CD4-positive, alpha-beta T cell (primary cell): ENCODE measurements at regions of chr14 and their contacts with region 1.

Region 1: DNA sequence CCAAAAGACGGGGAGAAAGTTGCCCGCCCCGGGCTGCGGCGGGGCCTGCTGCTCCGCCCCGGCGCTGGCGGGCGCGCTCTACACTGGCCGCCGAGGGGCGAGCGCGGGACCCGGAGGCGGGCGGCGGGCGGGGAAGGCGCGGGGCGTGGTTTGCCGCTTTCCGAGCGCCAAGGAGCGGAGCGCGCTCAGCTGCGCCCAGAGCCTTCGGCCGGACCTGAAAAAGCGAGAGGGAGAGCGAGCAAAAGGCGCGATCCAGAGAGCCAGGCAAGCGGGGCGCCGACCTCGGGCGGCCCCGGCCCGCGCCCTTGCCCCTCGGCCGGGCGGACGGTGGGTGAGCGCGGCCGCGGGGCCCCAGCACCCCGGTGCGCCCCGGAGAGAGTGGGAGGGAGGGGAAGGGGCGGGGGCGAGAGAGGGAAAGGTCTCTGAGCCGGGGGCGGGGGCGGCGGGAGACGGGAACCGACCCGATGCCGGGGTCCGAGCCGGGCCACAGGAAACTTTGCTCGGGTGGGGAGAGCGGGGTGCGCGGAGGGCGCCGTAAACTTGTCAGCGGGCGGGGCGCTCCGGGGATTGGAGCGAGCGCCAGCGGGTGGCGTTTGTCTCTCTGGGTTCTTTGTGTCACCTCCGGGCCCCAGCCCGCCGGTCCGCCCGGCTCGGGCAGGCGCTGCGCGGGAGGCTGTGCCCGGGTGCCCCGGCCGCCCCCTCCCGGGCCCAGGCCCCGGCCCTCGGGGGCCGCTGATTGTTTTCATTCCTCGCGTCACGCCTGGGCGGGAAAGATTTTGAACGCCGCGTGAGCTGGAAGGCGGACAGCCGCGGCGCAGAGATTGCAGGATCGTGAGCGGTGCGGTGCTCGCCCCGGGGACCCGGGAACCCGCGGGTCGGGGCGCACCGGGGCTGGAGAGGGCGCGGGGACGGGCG is at the start of gene SYNE2:
- DNase-seq: peak; percentile 65 to 91 (median 81)
- ATAC-seq: peak; percentile 80
- H3K4me3 ChIP-seq: peak within 1 kb of the TSS; percentile 68
- H3K4me3 Mint-ChIP-seq: peak within 1 kb of the TSS; percentile 100
- H3K27ac ChIP-seq: peak within 1 kb of the TSS; percentile 25 to 71
- H3K27ac Mint-ChIP-seq: peak within 1 kb of the TSS; percentile 96
- H3K4me1 ChIP-seq: peaks cover 37% of the 10 kb centered on the region
- H3K4me1 Mint-ChIP-seq: peaks cover 43% of the 10 kb centered on the region
- H3K27me3 ChIP-seq: no peaks in the 10 kb centered on the region
- H3K27me3 Mint-ChIP-seq: no peaks in the 10 kb centered on the region
- CTCF ChIP-seq: no peak
- total RNA-seq, gene SYNE2: 87.4 to 92.6 TPM

Region 2: GRCh38 chr14:63641473-63642228 is 211.4 kb before region 1 on chr14 and contains the start of gene WDR89:
- CTCF ChIA-PET with region 1: no interaction called
- POLR2A ChIA-PET with region 1: interaction called, 3 read pairs
- intact Hi-C with region 1: loop called in 1 of 2 experiments (anchors 10 kb)
- DNase-seq: peak; percentile 90 to 99 (median 94)
- ATAC-seq: peak; percentile 83
- H3K4me3 ChIP-seq: peak within 1 kb of the TSS; percentile 96
- H3K4me3 Mint-ChIP-seq: peak within 1 kb of the TSS; percentile 91
- H3K27ac ChIP-seq: peak within 1 kb of the TSS; percentile 98 to 99
- H3K27ac Mint-ChIP-seq: peak within 1 kb of the TSS; percentile 91
- H3K4me1 ChIP-seq: peaks cover 27% of the 10 kb centered on the region
- H3K4me1 Mint-ChIP-seq: peaks cover 43% of the 10 kb centered on the region
- H3K27me3 ChIP-seq: no peaks in the 10 kb centered on the region
- H3K27me3 Mint-ChIP-seq: no peaks in the 10 kb centered on the region
- CTCF ChIP-seq: peak; percentile 47
- total RNA-seq, gene WDR89: 12.4 to 13.4 TPM

Region 3: DNA sequence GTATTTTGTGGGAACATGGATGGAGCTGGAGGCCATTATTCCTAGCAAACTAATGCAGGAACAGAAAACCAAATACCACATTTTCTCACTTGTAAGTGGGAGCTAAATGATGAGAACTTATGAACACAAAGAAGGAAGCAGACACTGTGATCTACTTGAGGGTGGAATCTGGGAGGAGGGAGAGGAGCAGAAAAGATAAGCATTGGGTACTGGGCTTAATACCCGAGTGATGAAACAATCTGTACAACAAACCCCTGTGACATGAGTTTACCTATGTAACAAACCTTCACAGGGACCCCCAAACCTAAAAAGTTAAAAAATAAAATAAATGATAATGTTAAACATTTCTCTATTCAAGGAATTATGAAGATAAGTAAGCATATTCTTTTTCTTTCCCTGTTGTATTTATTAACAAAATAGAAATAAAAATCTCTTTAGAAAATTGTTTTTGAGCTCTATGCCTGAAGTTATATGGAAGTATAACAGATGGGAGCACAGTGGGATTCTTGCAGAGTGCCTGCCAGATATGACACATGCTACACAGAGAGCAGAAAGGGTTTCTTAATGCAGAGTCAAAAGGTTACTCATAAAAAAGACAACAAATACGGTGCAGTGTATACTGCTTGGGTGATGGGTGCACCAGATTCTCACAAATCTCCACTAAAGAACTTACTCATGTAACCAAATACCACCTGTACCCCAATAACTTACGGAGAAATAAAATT is 52.3 kb before region 1 on chr14:
- CTCF ChIA-PET with region 1: no interaction called
- POLR2A ChIA-PET with region 1: no interaction called
- intact Hi-C with region 1: no loop called
- DNase-seq: no peak
- ATAC-seq: no peak
- H3K4me3 ChIP-seq: no peak overlapping the region
- H3K4me3 Mint-ChIP-seq: no peak overlapping the region
- H3K27ac ChIP-seq: no peak overlapping the region
- H3K27ac Mint-ChIP-seq: no peak overlapping the region
- H3K4me1 ChIP-seq: no peaks in the 10 kb centered on the region
- H3K4me1 Mint-ChIP-seq: peaks cover 5% of the 10 kb centered on the region
- H3K27me3 ChIP-seq: no peaks in the 10 kb centered on the region
- H3K27me3 Mint-ChIP-seq: no peaks in the 10 kb centered on the region
- CTCF ChIP-seq: no peak

Region 4: GRCh38 chr14:63867933-63868921 is 15.2 kb after region 1 on chr14:
- CTCF ChIA-PET with region 1: interaction called, 17 read pairs
- POLR2A ChIA-PET with region 1: interaction called, 136 read pairs
- intact Hi-C with region 1: loop called (anchors 1 kb)
- DNase-seq: peak in 6 of 14 experiments; percentile 10 to 84 (median 50)
- ATAC-seq: no peak
- H3K4me3 ChIP-seq: peak overlapping the region; percentile 12
- H3K4me3 Mint-ChIP-seq: peak overlapping the region; percentile 87
- H3K27ac ChIP-seq: peak overlapping the region; percentile 38 to 41
- H3K27ac Mint-ChIP-seq: peak overlapping the region; percentile 93
- H3K4me1 ChIP-seq: peaks cover 63% of the 10 kb centered on the region
- H3K4me1 Mint-ChIP-seq: peaks cover 71% of the 10 kb centered on the region
- H3K27me3 ChIP-seq: no peaks in the 10 kb centered on the region
- H3K27me3 Mint-ChIP-seq: no peaks in the 10 kb centered on the region
- CTCF ChIP-seq: no peak

Region 5: DNA sequence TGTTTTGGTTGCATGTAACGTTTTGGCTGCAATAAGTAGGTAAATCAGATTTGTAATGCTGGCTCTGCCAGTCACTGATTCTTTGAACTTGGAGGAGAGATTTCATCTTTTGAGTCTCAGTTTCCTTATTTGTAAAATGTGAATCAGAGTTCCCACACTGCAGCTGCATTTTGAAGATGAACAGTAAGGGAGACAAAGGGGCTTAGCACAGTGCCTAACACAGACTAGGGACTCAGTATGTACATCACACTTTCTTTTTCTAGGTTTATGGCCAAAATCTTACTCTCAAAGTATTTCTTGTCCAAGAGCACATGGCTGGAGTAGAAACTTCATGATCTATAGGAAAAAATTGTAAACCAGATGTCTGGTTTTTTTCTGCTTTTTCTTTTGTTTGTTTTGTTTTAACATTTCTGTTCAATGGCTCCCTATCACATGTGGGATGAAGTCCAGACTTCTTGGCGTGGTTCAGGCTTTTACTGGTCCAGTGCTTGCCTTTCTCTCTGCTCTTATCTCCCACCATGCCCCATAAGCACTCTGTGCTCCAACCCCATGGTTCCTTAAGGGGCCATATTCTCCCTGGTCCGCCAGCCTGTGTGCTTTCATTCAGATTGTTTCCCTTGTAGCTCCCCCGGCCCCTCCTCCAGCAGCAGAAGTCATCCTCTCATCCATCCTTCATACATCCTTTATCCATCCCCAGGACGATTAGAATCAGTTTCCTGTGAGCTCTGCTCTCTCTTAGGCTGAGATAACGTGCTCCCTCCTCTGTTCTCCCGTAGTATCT is 57.7 kb after region 1 on chr14:
- CTCF ChIA-PET with region 1: interaction called, 18 read pairs
- POLR2A ChIA-PET with region 1: no interaction called
- intact Hi-C with region 1: loop called in 1 of 2 experiments (anchors 5 kb)
- DNase-seq: no peak
- ATAC-seq: no peak
- H3K4me3 ChIP-seq: no peak overlapping the region
- H3K4me3 Mint-ChIP-seq: peak overlapping the region; percentile 59
- H3K27ac ChIP-seq: no peak overlapping the region
- H3K27ac Mint-ChIP-seq: peak overlapping the region; percentile 1
- H3K4me1 ChIP-seq: peaks cover 2% of the 10 kb centered on the region
- H3K4me1 Mint-ChIP-seq: peaks cover 49% of the 10 kb centered on the region
- H3K27me3 ChIP-seq: no peaks in the 10 kb centered on the region
- H3K27me3 Mint-ChIP-seq: no peaks in the 10 kb centered on the region
- CTCF ChIP-seq: no peak

Region 6: GRCh38 chr14:63938198-63939005 is 85.3 kb after region 1 on chr14:
- CTCF ChIA-PET with region 1: interaction called, 6 read pairs
- POLR2A ChIA-PET with region 1: interaction called, 14 read pairs
- intact Hi-C with region 1: loop called (anchors 2 to 5 kb)
- DNase-seq: peak in 5 of 14 experiments; percentile 3 to 64 (median 36)
- ATAC-seq: peak; percentile 35
- H3K4me3 ChIP-seq: no peak overlapping the region
- H3K4me3 Mint-ChIP-seq: no peak overlapping the region
- H3K27ac ChIP-seq: peak overlapping the region in 1 of 2 donors; percentile 62
- H3K27ac Mint-ChIP-seq: no peak overlapping the region
- H3K4me1 ChIP-seq: peaks cover 47% of the 10 kb centered on the region
- H3K4me1 Mint-ChIP-seq: peaks cover 37% of the 10 kb centered on the region
- H3K27me3 ChIP-seq: no peaks in the 10 kb centered on the region
- H3K27me3 Mint-ChIP-seq: no peaks in the 10 kb centered on the region
- CTCF ChIP-seq: no peak

Region 7: DNA sequence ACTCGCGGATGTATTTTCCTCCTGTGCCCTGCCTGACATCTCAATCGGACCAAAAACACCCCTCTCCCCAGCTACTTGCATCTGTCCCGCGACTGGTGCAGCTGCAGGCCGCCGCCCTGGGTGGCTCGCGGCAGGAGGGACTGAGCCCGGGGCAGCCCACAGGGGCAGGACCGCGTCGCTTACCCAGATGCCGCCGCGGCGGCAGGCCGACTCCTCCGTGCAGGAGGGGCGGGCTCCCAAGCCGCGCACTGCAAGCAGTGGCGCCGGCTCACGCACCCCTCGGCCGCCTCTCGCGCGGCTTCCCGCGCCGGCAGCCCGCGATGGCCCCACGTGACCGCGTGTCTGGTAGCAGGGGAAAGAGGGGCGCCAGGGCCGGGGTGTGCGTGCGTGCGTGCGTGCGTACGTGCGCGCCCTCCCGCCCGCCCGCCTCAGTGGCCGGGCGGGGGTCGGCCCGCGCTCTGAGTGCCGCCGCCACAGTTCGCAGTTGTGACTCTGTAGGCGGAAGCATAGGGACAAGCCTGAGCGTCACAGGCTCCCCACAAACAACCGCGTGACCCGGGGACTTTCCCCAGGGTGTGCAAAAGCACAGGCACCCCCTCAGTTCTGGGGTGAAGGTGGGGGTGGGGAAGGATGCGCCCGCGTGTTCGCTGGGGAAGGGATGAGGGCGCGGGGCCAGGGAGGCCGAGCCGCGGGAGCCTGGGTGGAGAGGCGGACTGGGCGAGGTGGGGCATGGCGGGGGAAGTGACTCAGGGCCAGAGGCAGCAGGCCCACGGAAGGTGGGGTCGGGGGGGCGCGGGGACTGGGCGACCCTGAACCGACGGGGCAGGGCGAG is 650.6 kb after region 1 on chr14 and contains the start of gene ZBTB25:
- CTCF ChIA-PET with region 1: no interaction called
- POLR2A ChIA-PET with region 1: no interaction called
- intact Hi-C with region 1: loop called in 1 of 2 experiments (anchors 5 kb)
- DNase-seq: peak; percentile 91 to 100 (median 94)
- ATAC-seq: peak; percentile 64
- H3K4me3 ChIP-seq: peak within 1 kb of the TSS; percentile 96
- H3K4me3 Mint-ChIP-seq: peak within 1 kb of the TSS; percentile 100
- H3K27ac ChIP-seq: peak within 1 kb of the TSS; percentile 100
- H3K27ac Mint-ChIP-seq: peak within 1 kb of the TSS; percentile 100
- H3K4me1 ChIP-seq: peaks cover 60% of the 10 kb centered on the region
- H3K4me1 Mint-ChIP-seq: peaks cover 78% of the 10 kb centered on the region
- H3K27me3 ChIP-seq: no peaks in the 10 kb centered on the region
- H3K27me3 Mint-ChIP-seq: peaks cover 4% of the 10 kb centered on the region
- CTCF ChIP-seq: no peak
- total RNA-seq, gene ZBTB25: 56.8 to 58.1 TPM